Panc1 (cell line): ENCODE measurements at regions of chr19 and their contacts with region 1.

Region 1: DNA sequence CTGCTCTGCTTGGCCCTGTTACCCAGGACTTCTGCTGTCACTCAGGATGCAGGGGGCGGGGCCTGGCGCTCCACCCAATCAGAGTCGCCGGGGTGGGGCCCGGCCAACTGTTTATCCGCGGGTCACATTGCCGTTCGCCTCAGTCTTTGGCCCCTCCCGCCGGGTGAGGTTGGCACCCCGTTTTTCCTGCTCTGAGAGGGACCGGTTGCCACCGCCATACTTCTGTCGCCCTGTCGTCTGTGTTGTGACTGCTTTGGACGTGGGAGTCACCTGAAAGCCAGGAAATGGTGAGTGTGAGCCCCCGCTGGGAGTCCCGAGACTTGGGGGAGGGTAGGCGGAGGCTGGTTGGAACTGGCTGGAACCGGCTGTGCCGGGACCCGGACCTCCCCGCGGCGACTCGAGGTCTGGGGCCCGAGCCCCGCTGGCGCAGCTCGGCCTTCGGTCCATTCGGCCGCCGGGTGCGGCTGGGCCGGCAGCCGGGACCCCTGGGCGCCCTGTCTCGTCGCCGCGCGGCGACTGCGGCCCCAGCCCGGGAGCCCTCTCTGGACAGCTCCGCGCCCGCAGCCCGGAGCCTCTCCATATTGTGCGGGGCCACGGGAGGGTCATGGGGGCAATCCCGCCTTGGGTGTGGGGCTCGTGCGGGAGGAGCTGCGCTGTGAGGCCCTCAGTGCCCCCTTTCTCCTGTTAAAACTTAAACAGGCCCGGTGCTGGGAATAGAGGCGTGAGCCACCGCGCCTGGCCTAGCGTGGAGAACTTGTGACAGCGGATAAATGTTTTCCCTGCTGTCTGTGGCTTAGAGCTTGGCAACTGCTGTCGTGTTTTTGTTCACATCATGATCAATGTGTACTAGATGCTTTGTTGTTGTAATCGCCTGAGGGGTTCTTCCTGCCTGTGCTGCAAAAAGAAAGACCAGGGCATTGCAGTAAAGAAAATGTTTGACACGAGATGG is at the start of gene ZNF844:
- DNase-seq: peak; percentile 27
- ATAC-seq: peak; percentile 97
- H3K4me3 ChIP-seq: peak within 1 kb of the TSS; percentile 68 to 82
- H3K27ac ChIP-seq: peak within 1 kb of the TSS; percentile 77
- H3K4me1 ChIP-seq: no peaks in the 10 kb centered on the region
- H3K27me3 ChIP-seq: no peaks in the 10 kb centered on the region
- CTCF ChIP-seq: no peak
- total RNA-seq, gene ZNF844: 8.6 TPM

Region 2: DNA sequence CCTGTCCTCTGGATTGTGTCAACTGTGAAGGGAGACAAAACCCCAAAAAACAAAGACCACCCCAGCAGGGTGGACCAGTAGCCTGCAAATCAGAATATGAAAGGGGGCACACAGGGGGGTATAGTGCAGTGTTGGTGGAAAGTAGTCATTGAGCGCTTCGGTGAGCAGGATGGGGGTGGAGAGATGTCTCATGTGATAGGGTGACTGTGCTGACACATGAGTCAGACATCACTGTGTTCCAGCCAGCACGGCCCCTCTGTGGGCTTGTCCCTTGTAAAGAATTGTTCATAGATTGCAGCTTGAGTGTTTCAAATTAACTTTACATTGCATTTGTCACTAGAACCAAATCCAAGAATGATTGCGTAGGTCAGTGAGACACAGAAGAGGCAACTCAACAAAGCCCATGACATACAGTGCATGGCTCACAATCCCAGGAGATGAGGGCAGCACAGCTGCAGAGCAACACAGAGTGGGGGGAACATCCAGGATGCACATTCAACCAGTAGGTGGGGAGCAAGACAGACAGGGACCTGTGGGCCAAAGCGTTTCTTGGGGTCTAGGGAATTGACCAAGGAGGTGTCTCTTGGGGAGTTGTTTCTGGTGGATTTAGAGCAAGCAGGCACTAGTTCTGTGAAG is 243.3 kb before region 1 on chr19:
- CTCF ChIA-PET with region 1: no interaction called
- POLR2A ChIA-PET with region 1: no interaction called
- in situ Hi-C with region 1: no loop called
- intact Hi-C with region 1: no loop called
- DNase-seq: no peak
- ATAC-seq: no peak
- H3K4me3 ChIP-seq: no peak overlapping the region
- H3K27ac ChIP-seq: no peak overlapping the region
- H3K4me1 ChIP-seq: no peaks in the 10 kb centered on the region
- H3K27me3 ChIP-seq: no peaks in the 10 kb centered on the region
- CTCF ChIP-seq: no peak

Region 3: DNA sequence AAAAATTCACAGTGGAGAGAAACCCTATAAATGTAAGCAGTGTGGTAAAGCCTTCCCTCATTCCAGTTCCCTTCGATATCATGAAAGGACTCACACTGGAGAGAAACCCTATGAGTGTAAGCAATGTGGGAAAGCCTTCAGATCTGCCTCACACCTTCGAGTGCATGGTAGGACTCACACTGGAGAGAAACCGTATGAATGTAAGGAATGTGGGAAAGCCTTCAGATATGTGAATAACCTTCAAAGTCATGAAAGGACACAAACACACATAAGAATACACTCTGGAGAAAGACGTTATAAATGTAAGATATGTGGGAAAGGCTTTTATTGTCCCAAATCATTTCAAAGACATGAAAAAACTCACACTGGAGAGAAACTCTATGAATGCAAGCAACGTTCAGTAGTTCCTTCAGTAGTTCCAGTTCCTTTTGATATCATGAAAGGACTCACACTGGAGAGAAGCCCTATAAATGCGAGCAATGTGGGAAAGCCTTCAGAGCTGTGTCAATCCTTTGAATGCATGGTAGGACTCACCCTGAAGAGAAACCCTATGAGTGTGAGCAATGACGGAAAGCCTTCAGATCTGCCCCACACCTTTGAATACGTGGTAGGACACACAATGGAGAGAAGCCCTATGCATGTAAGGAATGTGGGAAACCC is 232.5 kb before region 1 on chr19:
- CTCF ChIA-PET with region 1: no interaction called
- POLR2A ChIA-PET with region 1: no interaction called
- in situ Hi-C with region 1: no loop called
- intact Hi-C with region 1: no loop called
- DNase-seq: no peak
- ATAC-seq: no peak
- H3K4me3 ChIP-seq: no peak overlapping the region
- H3K27ac ChIP-seq: no peak overlapping the region
- H3K4me1 ChIP-seq: no peaks in the 10 kb centered on the region
- H3K27me3 ChIP-seq: no peaks in the 10 kb centered on the region
- CTCF ChIP-seq: no peak

Region 4: DNA sequence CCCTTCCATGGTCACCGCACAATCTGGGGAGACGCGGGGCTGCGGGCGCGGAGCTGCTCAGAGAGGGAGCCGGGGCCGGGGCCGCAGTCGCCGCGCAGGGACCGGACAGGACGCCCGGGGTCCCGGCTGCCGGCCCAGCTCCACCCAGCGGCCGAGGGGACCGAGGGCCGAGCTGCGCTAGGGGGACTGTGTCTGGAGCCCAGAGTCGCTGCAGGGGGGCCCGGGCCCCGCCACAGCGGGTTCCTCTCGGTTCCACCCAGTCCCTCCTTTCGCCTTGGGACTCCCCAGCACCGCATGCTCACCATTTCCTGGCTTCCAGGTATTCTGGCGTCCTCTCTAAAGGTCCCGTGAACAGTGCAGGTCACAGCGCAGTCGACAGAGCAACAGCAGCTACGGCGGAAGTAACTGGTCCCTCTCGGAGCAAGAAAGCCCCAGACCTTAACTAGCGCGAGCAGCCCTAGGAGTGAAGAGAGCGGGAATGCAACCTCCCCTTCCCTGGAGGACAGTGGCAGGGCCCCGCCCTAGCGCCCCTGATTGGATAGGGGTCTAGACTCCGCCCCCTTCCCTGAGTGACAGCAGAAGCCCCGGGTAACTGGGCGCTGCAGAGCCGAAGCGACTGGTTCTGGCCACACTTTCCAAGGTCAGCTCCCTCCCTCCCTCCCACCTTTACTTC is 12.2 kb before region 1 on chr19 and contains the start of gene ZNF878:
- CTCF ChIA-PET with region 1: interaction called, 12 read pairs
- POLR2A ChIA-PET with region 1: interaction called, 8 read pairs
- in situ Hi-C with region 1: no loop called
- intact Hi-C with region 1: no loop called
- DNase-seq: no peak
- ATAC-seq: peak; percentile 100
- H3K4me3 ChIP-seq: peak within 1 kb of the TSS; percentile 70 to 83
- H3K27ac ChIP-seq: peak within 1 kb of the TSS; percentile 78
- H3K4me1 ChIP-seq: peaks cover 3% of the 10 kb centered on the region; the same call in 1 of the 2 replicates
- H3K27me3 ChIP-seq: no peaks in the 10 kb centered on the region
- CTCF ChIP-seq: peak; percentile 38; the same call in 1 of the 2 replicates
- total RNA-seq, gene ZNF878: 2.1 TPM

Region 5: DNA sequence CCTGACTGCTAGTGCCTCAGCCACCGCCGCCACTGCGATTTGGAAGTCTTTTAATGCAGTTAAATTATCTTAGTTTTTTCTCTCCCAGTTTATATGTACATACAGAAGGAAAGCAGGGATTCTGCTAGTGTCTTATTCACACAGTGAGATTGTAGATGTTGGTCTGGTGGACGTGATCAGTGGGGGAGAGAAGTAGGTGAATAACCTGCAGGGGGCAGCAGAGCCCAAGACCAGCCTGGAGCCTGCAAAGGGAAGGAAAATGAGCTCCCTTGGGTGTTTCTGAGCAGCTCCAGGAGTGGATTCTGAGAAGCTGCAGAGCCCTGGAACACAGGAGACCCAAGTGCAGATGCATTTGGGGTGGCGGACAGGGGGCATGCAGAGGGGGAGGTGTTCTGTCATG is 25.9 kb after region 1 on chr19:
- CTCF ChIA-PET with region 1: interaction called, 23 read pairs
- POLR2A ChIA-PET with region 1: no interaction called
- in situ Hi-C with region 1: no loop called
- intact Hi-C with region 1: no loop called
- DNase-seq: peak; percentile 10
- ATAC-seq: peak; percentile 46; the same call in 1 of the 2 replicates
- H3K4me3 ChIP-seq: no peak overlapping the region
- H3K27ac ChIP-seq: no peak overlapping the region
- H3K4me1 ChIP-seq: no peaks in the 10 kb centered on the region
- H3K27me3 ChIP-seq: no peaks in the 10 kb centered on the region
- CTCF ChIP-seq: peak; percentile 78